ENCODE measurements at regions of chr6 and their contacts with region 1.

Region 1: GRCh38 chr6:25490018-25490801 is 161.8 kb upstream of the SCGN start:
- DNase-seq: peak; percentile 79 to 92 (median 82)
- H3K4me3 ChIP-seq: no peak overlapping the region
- H3K27ac ChIP-seq: no peak overlapping the region
- H3K4me1 ChIP-seq: peaks cover 0 to 12% of the 10 kb centered on the region in 2 donors
- H3K27me3 ChIP-seq: no peaks in the 10 kb centered on the region
- CTCF ChIP-seq: peak; percentile 75 to 90 (median 88)
- POLR2A ChIP-seq: no peak

Region 2: DNA sequence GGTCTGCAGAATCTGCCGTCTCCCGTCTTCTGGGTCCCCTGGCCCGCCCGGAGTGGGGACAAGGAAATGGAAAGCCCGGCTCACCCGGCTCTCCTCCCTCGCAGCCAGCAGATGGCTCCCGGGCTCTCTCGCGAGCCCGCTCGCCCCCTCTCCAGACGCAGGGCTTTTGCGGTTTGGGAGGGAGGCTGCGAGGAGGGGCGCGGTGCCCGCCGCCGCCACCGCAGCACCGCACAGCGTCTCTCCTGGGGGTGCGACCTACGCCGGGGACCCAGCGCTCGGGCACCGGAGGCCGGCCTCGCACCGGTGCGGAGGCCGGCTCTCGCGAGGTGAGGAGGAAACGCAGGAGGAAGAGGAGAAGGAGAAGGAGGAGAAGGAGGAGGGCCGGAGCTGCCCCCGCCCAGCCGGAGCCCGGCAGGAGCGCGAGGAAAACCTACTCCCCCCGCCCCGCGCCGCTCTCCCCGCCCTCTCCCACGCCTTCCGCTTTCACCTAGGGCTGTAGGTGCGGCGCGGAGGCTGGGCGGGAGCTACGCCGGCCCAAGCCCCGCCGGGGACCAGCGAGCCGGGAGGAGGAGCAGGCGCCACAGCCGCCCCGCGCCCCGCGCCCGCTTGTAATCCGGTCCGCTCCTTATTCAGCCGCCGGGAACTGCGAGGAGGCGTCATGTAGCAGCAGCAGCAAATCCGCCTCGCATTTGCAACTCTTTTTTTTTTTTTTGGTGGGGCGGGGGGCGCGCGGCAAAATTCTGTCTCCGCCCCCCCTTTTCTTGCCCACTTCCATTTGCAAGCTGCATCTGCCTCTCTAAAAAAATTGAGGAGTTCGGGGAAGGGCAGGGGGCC is 211.1 kb before region 1 on chr6 and contains the start of gene CARMIL1:
- intact Hi-C with region 1: loop called (anchors 5 kb)
- DNase-seq: peak; percentile 79 to 89 (median 82)
- H3K4me3 ChIP-seq: peak within 1 kb of the TSS; percentile 74 to 93 (median 86)
- H3K27ac ChIP-seq: peak within 1 kb of the TSS in 4 of 5 donors; percentile 48 to 89 (median 68)
- H3K4me1 ChIP-seq: peaks cover 7 to 21% of the 10 kb centered on the region in 2 donors
- H3K27me3 ChIP-seq: no peaks in the 10 kb centered on the region
- CTCF ChIP-seq: peak; percentile 53 to 80 (median 72)
- POLR2A ChIP-seq: peak; percentile 9 to 19
- total RNA-seq, gene CARMIL1: 12.0 to 36.2 (median 19.6) TPM

Region 3: DNA sequence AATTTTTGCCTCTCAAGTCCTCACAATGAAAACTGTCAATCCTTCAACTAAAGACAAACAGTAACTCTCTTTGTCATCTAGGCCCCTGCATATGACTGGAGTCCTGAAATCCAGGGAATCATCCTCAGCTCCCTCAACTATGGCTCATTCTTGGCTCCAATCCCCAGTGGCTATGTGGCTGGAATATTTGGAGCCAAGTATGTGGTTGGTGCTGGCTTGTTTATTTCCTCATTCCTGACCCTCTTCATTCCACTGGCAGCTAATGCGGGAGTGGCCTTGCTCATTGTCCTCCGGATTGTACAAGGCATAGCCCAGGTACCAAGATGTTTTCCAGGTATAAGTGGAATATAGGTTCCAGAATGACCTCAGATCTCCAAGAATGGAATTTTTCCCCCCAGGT is 279.8 kb after region 1 on chr6:
- intact Hi-C with region 1: no loop called
- DNase-seq: no peak
- H3K4me3 ChIP-seq: no peak overlapping the region
- H3K27ac ChIP-seq: no peak overlapping the region
- H3K4me1 ChIP-seq: no peaks in the 10 kb centered on the region
- H3K27me3 ChIP-seq: no peaks in the 10 kb centered on the region
- CTCF ChIP-seq: no peak
- POLR2A ChIP-seq: no peak